Activated CD4-positive, alpha-beta T cell treated with anti-CD3 and anti-CD28 coated beads for 36 hours (primary cell): ENCODE measurements at regions of chr4 and their contacts with region 1.

Region 1: GRCh38 chr4:27010334-27010940 is 149.8 kb downstream of the STIM2 start:
- DNase-seq: peak; percentile 77
- ATAC-seq: peak; percentile 76
- H3K4me3 Mint-ChIP-seq: no peak overlapping the region
- H3K27ac Mint-ChIP-seq: no peak overlapping the region
- H3K4me1 Mint-ChIP-seq: peaks cover 24% of the 10 kb centered on the region
- H3K27me3 Mint-ChIP-seq: no peaks in the 10 kb centered on the region

Region 2: GRCh38 chr4:25993395-25994185 is 1016.8 kb before region 1 on chr4:
- CTCF ChIA-PET with region 1: no interaction called
- POLR2A ChIA-PET with region 1: no interaction called
- intact Hi-C with region 1: loop called in 1 of 2 experiments (anchors 2 kb)
- DNase-seq: peak; percentile 59
- ATAC-seq: peak; percentile 79
- H3K4me3 Mint-ChIP-seq: no peak overlapping the region
- H3K27ac Mint-ChIP-seq: no peak overlapping the region
- H3K4me1 Mint-ChIP-seq: peaks cover 10% of the 10 kb centered on the region
- H3K27me3 Mint-ChIP-seq: peaks cover 2% of the 10 kb centered on the region

Region 3: GRCh38 chr4:26459054-26459755 is 551.2 kb before region 1 on chr4:
- CTCF ChIA-PET with region 1: interaction called, 5 read pairs
- POLR2A ChIA-PET with region 1: no interaction called
- intact Hi-C with region 1: loop called (anchors 1 kb)
- DNase-seq: no peak
- ATAC-seq: peak; percentile 84
- H3K4me3 Mint-ChIP-seq: peak overlapping the region; percentile 4
- H3K27ac Mint-ChIP-seq: no peak overlapping the region
- H3K4me1 Mint-ChIP-seq: peaks cover 19% of the 10 kb centered on the region
- H3K27me3 Mint-ChIP-seq: no peaks in the 10 kb centered on the region

Region 4: GRCh38 chr4:26583865-26584652 is 426.4 kb before region 1 on chr4 and contains the start of gene TBC1D19:
- CTCF ChIA-PET with region 1: no interaction called
- POLR2A ChIA-PET with region 1: no interaction called
- intact Hi-C with region 1: loop called in 1 of 2 experiments (anchors 2 kb)
- DNase-seq: peak; percentile 93
- ATAC-seq: peak; percentile 96
- H3K4me3 Mint-ChIP-seq: peak within 1 kb of the TSS; percentile 93
- H3K27ac Mint-ChIP-seq: peak within 1 kb of the TSS; percentile 92
- H3K4me1 Mint-ChIP-seq: peaks cover 24% of the 10 kb centered on the region
- H3K27me3 Mint-ChIP-seq: peaks cover 1% of the 10 kb centered on the region
- total RNA-seq, gene TBC1D19: 5.0 to 5.3 TPM

Region 5: GRCh38 chr4:26787461-26788340 is 222.7 kb before region 1 on chr4:
- CTCF ChIA-PET with region 1: interaction called, 4 read pairs
- POLR2A ChIA-PET with region 1: no interaction called
- intact Hi-C with region 1: loop called in 1 of 2 experiments (anchors 5 kb)
- DNase-seq: peak; percentile 74
- ATAC-seq: peak; percentile 97
- H3K4me3 Mint-ChIP-seq: no peak overlapping the region
- H3K27ac Mint-ChIP-seq: peak overlapping the region; percentile 26
- H3K4me1 Mint-ChIP-seq: peaks cover 15% of the 10 kb centered on the region
- H3K27me3 Mint-ChIP-seq: peaks cover 3% of the 10 kb centered on the region